CD4-positive, alpha-beta T cell (primary cell): ENCODE measurements at regions of chr19 and their contacts with region 1.

Region 1: DNA sequence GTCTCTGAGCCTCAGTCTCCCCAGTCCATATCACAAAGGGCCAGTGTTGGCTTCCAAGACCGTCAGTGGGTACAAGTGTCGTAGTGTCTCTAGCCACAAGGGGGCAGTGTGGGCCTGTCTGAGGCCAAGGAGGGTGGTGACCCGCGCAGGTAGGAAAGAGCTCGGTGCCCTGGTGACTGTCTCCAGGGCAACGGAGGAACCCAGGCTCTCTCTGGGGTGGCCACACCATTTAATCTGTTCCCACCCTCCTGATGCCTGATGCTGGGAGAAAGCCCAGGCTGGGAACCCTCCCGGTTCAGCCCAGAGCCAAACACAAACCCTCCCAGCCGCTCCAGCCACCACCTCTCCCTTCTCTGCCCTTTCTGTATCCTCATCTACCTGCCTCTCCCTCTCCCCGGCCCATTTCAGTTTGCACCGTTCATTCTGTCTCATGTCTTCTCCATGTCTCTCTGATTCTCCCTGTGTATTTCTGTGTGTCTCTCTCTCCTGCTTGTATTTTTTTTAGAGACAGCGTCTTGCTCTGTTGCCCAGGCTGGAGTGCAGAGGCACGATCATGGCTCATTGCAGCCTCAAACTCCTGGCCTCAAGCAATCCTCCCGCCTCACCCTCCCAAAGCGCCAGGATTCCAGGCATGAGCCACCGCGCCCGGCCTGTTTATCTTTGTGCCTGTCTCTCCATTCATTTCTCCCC is 17.5 kb upstream of the MEIS3 start:
- DNase-seq: peak; percentile 77 to 91 (median 81)
- ATAC-seq: peak; percentile 95
- H3K4me3 ChIP-seq: no peak overlapping the region
- H3K4me3 Mint-ChIP-seq: peak overlapping the region; percentile 11
- H3K27ac ChIP-seq: no peak overlapping the region
- H3K27ac Mint-ChIP-seq: no peak overlapping the region
- H3K4me1 ChIP-seq: peaks cover 15% of the 10 kb centered on the region
- H3K4me1 Mint-ChIP-seq: peaks cover 14% of the 10 kb centered on the region
- H3K27me3 ChIP-seq: peaks cover 21 to 24% of the 10 kb centered on the region in 2 experiments
- H3K27me3 Mint-ChIP-seq: peaks cover 74% of the 10 kb centered on the region
- CTCF ChIP-seq: peak; percentile 92

Region 2: GRCh38 chr19:47447470-47448359 is 10.9 kb after region 1 on chr19:
- CTCF ChIA-PET with region 1: interaction called, 12 read pairs
- POLR2A ChIA-PET with region 1: interaction called, 3 read pairs
- intact Hi-C with region 1: no loop called
- DNase-seq: peak in 12 of 14 experiments; percentile 23 to 81 (median 53)
- ATAC-seq: peak; percentile 64
- H3K4me3 ChIP-seq: peak overlapping the region; percentile 10
- H3K4me3 Mint-ChIP-seq: peak overlapping the region; percentile 79
- H3K27ac ChIP-seq: no peak overlapping the region
- H3K27ac Mint-ChIP-seq: no peak overlapping the region
- H3K4me1 ChIP-seq: peaks cover 51% of the 10 kb centered on the region
- H3K4me1 Mint-ChIP-seq: peaks cover 53% of the 10 kb centered on the region
- H3K27me3 ChIP-seq: peaks cover 23 to 31% of the 10 kb centered on the region in 2 experiments
- H3K27me3 Mint-ChIP-seq: peaks cover 71% of the 10 kb centered on the region
- CTCF ChIP-seq: no peak

Region 3: GRCh38 chr19:47514869-47515588 is 78.2 kb after region 1 on chr19 and contains the start of gene NAPA:
- CTCF ChIA-PET with region 1: interaction called, 22 read pairs
- POLR2A ChIA-PET with region 1: interaction called, 11 read pairs
- intact Hi-C with region 1: loop called (anchors 1 kb)
- DNase-seq: peak; percentile 100
- ATAC-seq: peak; percentile 92
- H3K4me3 ChIP-seq: peak within 1 kb of the TSS; percentile 97
- H3K4me3 Mint-ChIP-seq: peak within 1 kb of the TSS; percentile 99
- H3K27ac ChIP-seq: peak within 1 kb of the TSS; percentile 93 to 98
- H3K27ac Mint-ChIP-seq: peak within 1 kb of the TSS; percentile 96
- H3K4me1 ChIP-seq: peaks cover 77% of the 10 kb centered on the region
- H3K4me1 Mint-ChIP-seq: peaks cover 88% of the 10 kb centered on the region
- H3K27me3 ChIP-seq: no peaks in the 10 kb centered on the region
- H3K27me3 Mint-ChIP-seq: no peaks in the 10 kb centered on the region
- CTCF ChIP-seq: no peak
- total RNA-seq, gene NAPA: 135 to 145 TPM

Region 4: GRCh38 chr19:47608074-47608918 is 171.4 kb after region 1 on chr19:
- CTCF ChIA-PET with region 1: interaction called, 4 read pairs
- POLR2A ChIA-PET with region 1: no interaction called
- intact Hi-C with region 1: loop called (anchors 5 to 10 kb)
- DNase-seq: peak; percentile 91 to 98 (median 96)
- ATAC-seq: peak; percentile 81
- H3K4me3 ChIP-seq: peak overlapping the region; percentile 85
- H3K4me3 Mint-ChIP-seq: peak overlapping the region; percentile 91
- H3K27ac ChIP-seq: peak overlapping the region; percentile 62 to 88
- H3K27ac Mint-ChIP-seq: peak overlapping the region; percentile 91
- H3K4me1 ChIP-seq: peaks cover 40% of the 10 kb centered on the region
- H3K4me1 Mint-ChIP-seq: peaks cover 30% of the 10 kb centered on the region
- H3K27me3 ChIP-seq: no peaks in the 10 kb centered on the region
- H3K27me3 Mint-ChIP-seq: no peaks in the 10 kb centered on the region
- CTCF ChIP-seq: no peak

Region 5: GRCh38 chr19:47682939-47683338 is 246.1 kb after region 1 on chr19:
- CTCF ChIA-PET with region 1: no interaction called
- POLR2A ChIA-PET with region 1: no interaction called
- intact Hi-C with region 1: no loop called
- DNase-seq: no peak
- ATAC-seq: no peak
- H3K4me3 ChIP-seq: no peak overlapping the region
- H3K4me3 Mint-ChIP-seq: no peak overlapping the region
- H3K27ac ChIP-seq: no peak overlapping the region
- H3K27ac Mint-ChIP-seq: no peak overlapping the region
- H3K4me1 ChIP-seq: no peaks in the 10 kb centered on the region
- H3K4me1 Mint-ChIP-seq: no peaks in the 10 kb centered on the region
- H3K27me3 ChIP-seq: no peaks in the 10 kb centered on the region
- H3K27me3 Mint-ChIP-seq: no peaks in the 10 kb centered on the region
- CTCF ChIP-seq: no peak

Region 6: GRCh38 chr19:47707135-47707925 is 270.5 kb after region 1 on chr19:
- CTCF ChIA-PET with region 1: interaction called, 20 read pairs
- POLR2A ChIA-PET with region 1: interaction called, 16 read pairs
- intact Hi-C with region 1: loop called (anchors 1 kb)
- DNase-seq: peak; percentile 57 to 85 (median 67)
- ATAC-seq: peak; percentile 93
- H3K4me3 ChIP-seq: no peak overlapping the region
- H3K4me3 Mint-ChIP-seq: no peak overlapping the region
- H3K27ac ChIP-seq: no peak overlapping the region
- H3K27ac Mint-ChIP-seq: no peak overlapping the region
- H3K4me1 ChIP-seq: peaks cover 4% of the 10 kb centered on the region
- H3K4me1 Mint-ChIP-seq: peaks cover 4% of the 10 kb centered on the region
- H3K27me3 ChIP-seq: peaks cover 9 to 12% of the 10 kb centered on the region in 2 experiments
- H3K27me3 Mint-ChIP-seq: peaks cover 16% of the 10 kb centered on the region
- CTCF ChIP-seq: peak; percentile 82

Region 7: DNA sequence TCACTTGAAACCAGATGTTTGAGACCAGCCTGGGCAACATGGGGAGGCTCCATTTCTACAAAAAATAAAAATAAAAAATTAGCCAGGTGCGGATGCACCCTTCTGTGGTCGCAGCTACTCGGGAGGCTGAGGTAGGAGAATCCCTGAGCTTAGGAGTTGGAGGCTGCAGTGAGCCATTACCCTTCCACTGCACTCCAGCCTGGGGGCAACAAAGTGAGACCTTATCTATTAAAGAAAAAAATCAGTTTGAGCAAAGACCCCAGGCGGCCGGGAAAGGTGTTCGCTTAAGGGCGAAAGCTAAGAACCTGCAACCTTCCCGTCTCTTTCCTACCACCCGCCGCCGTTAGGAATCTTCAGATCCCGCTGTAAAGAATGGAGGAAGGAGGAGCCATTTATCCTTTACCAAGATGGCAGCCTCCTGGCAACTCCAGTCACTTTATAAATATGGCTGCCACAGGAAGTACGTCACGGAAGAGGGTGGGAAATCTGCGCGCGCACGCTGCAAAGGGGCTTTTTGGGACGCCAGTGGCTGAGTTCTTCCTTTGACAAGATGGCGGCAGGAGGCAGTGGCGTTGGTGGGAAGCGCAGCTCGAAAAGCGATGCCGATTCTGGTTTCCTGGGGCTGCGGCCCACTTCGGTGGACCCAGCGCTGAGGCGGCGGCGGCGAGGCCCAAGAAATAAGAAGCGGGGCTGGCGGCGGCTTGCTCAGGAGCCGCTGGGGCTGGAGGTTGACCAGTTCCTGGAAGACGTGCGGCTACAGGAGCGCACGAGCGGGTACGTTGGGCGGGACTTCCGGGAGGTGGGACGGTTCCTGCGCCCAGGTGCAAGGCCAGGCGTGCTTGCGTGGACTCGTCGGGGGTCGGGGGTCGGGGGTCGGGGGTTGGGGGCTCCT is 308.4 kb after region 1 on chr19 and contains the start of gene NOP53:
- CTCF ChIA-PET with region 1: interaction called, 5 read pairs
- POLR2A ChIA-PET with region 1: interaction called, 10 read pairs
- intact Hi-C with region 1: loop called (anchors 1 kb)
- DNase-seq: peak; percentile 94 to 99 (median 97)
- ATAC-seq: peak; percentile 80
- H3K4me3 ChIP-seq: peak within 1 kb of the TSS; percentile 59
- H3K4me3 Mint-ChIP-seq: peak within 1 kb of the TSS; percentile 98
- H3K27ac ChIP-seq: peak within 1 kb of the TSS; percentile 93 to 98
- H3K27ac Mint-ChIP-seq: peak within 1 kb of the TSS; percentile 94
- H3K4me1 ChIP-seq: peaks cover 66% of the 10 kb centered on the region
- H3K4me1 Mint-ChIP-seq: peaks cover 39% of the 10 kb centered on the region
- H3K27me3 ChIP-seq: no peaks in the 10 kb centered on the region
- H3K27me3 Mint-ChIP-seq: no peaks in the 10 kb centered on the region
- CTCF ChIP-seq: no peak
- total RNA-seq, gene NOP53: 1,074 to 1,154 TPM